GM12878 (cell line): ENCODE measurements at regions of chr12 and their contacts with region 1.

Region 1: DNA sequence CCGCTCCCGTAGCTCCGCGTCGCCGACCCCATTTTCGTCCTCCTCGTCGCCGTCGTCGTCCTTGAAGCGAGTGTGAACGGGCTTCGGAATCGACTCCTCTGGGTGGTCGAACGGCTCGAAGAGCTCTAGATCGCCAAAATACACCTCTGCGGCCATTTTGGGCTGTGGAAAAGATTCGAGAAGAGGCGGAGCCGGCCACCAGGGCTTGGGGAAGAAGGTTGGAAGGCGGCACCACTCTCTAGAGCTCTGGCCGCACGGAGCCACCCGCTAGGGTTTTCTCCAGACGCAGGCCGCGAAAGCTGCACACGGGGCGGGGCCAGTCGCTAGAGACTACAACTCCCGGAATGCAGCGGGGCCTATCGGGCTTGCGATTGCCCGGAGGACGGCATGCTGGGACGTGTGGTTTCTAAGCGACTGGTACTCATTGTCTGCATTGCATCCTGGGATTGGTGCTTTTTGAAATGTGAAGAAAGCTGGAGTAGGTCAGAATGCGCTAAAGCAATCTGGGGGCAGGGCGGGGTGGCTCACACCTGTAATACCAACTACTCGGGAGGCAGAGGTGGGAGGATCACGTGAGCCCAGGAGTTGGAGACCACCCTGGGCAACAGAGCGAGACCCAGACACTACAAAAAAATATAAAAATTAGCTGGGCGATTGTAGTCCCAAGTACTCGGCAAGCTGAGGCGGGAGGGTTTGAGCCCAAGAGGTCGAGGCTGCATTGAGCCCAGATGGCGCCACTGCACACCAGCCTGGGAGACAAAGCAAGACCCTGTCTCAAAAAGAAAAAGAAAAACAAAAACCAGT is at the start of gene ZCCHC8:
- DNase-seq: peak; percentile 95
- ATAC-seq: peak; percentile 95
- H3K4me3 ChIP-seq: peak within 1 kb of the TSS; percentile 96
- H3K27ac ChIP-seq: peak within 1 kb of the TSS; percentile 98
- H3K4me1 ChIP-seq: peaks cover 10% of the 10 kb centered on the region
- H3K27me3 ChIP-seq: no peaks in the 10 kb centered on the region
- CTCF ChIP-seq: peak in 2 of 3 experiments; percentile 12 to 15; a peak in 1 of 6 replicates
- EP300 ChIP-seq: 0 out of 4 replicates have a peak, but pooled peaks of 1 of the 2 experiments have one; percentile 23
- POLR2A ChIP-seq: peak; percentile 94
- RAD21 ChIP-seq: no peak
- polyA plus RNA-seq, gene ZCCHC8: 8.8 to 9.4 TPM

Region 2: GRCh38 chr12:122399592-122400373 is 101.1 kb before region 1 on chr12:
- CTCF ChIA-PET with region 1: interaction called, 16 read pairs
- POLR2A ChIA-PET with region 1: interaction called, 6 read pairs
- RAD21 ChIA-PET with region 1: interaction called, 33 read pairs
- SMC1A ChIA-PET with region 1: interaction called, 21 read pairs
- in situ Hi-C with region 1: no loop called
- intact Hi-C with region 1: no loop called
- DNase-seq: no peak
- ATAC-seq: peak; percentile 75
- H3K4me3 ChIP-seq: no peak overlapping the region
- H3K27ac ChIP-seq: peak overlapping the region; percentile 78
- H3K4me1 ChIP-seq: peaks cover 38% of the 10 kb centered on the region
- H3K27me3 ChIP-seq: no peaks in the 10 kb centered on the region
- CTCF ChIP-seq: peak; percentile 57 to 81 (median 76); a peak in 5 of 6 replicates
- EP300 ChIP-seq: no peak
- POLR2A ChIP-seq: no peak
- RAD21 ChIP-seq: peak; percentile 98

Region 3: GRCh38 chr12:122413516-122414404 is 87.1 kb before region 1 on chr12:
- CTCF ChIA-PET with region 1: interaction called, 3 read pairs
- POLR2A ChIA-PET with region 1: interaction called, 11 read pairs
- RAD21 ChIA-PET with region 1: interaction called, 3 read pairs
- SMC1A ChIA-PET with region 1: interaction called, 3 read pairs
- in situ Hi-C with region 1: no loop called
- intact Hi-C with region 1: no loop called
- DNase-seq: no peak
- ATAC-seq: peak; percentile 63
- H3K4me3 ChIP-seq: peak overlapping the region; percentile 50; the same call in 1 of the 2 replicates
- H3K27ac ChIP-seq: peak overlapping the region; percentile 95
- H3K4me1 ChIP-seq: peaks cover 36% of the 10 kb centered on the region
- H3K27me3 ChIP-seq: no peaks in the 10 kb centered on the region
- CTCF ChIP-seq: no peak
- EP300 ChIP-seq: 0 out of 4 replicates have a peak, but pooled peaks of 1 of the 2 experiments have one; percentile 27
- POLR2A ChIP-seq: no peak
- RAD21 ChIP-seq: no peak

Region 4: DNA sequence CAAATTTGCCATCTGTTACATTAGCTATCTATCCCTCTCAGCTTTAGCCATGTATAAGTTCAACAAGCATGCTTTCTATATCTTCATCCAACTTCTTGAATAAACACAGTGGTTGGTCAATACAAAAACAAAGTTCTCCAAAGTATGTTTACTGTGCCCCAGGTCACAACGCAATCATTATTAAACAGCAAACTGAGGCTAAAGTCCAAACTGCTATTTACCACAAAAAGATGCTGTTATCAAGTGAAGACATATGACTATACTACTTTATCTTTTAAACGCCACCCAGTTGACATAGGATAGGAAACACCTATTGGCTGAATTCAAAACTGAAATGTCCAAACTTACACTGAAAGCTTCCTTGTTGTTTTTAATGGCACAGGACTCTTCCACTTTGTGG is 11.8 kb before region 1 on chr12:
- CTCF ChIA-PET with region 1: interaction called, 6 read pairs
- POLR2A ChIA-PET with region 1: interaction called, 14 read pairs
- RAD21 ChIA-PET with region 1: interaction called, 4 read pairs
- SMC1A ChIA-PET with region 1: interaction called, 16 read pairs
- in situ Hi-C with region 1: no loop called
- intact Hi-C with region 1: no loop called
- DNase-seq: no peak
- ATAC-seq: no peak
- H3K4me3 ChIP-seq: no peak overlapping the region
- H3K27ac ChIP-seq: no peak overlapping the region
- H3K4me1 ChIP-seq: no peaks in the 10 kb centered on the region
- H3K27me3 ChIP-seq: no peaks in the 10 kb centered on the region
- CTCF ChIP-seq: no peak
- EP300 ChIP-seq: no peak
- POLR2A ChIP-seq: no peak
- RAD21 ChIP-seq: no peak

Region 5: DNA sequence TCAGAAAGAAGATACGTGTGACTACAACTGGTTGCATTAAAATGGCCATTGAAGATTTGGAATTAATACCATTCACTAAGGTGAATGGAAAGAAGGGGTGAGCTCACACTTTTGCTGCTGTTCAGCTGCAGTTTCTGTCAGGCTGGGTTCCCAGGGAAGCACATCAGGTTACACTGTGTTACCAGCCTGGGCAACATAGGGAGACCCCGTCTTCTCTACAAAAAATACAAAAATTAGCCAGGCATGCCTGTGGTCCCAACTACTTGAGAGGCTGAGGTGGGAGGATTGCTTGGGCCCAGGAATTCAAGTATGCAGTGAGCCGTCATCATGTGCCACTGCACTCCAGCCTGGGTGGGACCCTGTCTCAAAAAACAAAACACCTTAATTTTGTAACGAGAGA is 12.8 kb after region 1 on chr12:
- CTCF ChIA-PET with region 1: interaction called, 4 read pairs
- POLR2A ChIA-PET with region 1: interaction called, 40 read pairs
- RAD21 ChIA-PET with region 1: interaction called, 4 read pairs
- SMC1A ChIA-PET with region 1: interaction called, 39 read pairs
- in situ Hi-C with region 1: no loop called
- intact Hi-C with region 1: no loop called
- DNase-seq: no peak
- ATAC-seq: peak; percentile 19
- H3K4me3 ChIP-seq: no peak overlapping the region
- H3K27ac ChIP-seq: no peak overlapping the region
- H3K4me1 ChIP-seq: peaks cover 8% of the 10 kb centered on the region
- H3K27me3 ChIP-seq: no peaks in the 10 kb centered on the region
- CTCF ChIP-seq: no peak
- EP300 ChIP-seq: no peak
- POLR2A ChIP-seq: no peak
- RAD21 ChIP-seq: no peak

Region 6: GRCh38 chr12:122519418-122519817 is 18.5 kb after region 1 on chr12:
- CTCF ChIA-PET with region 1: interaction called, 13 read pairs
- POLR2A ChIA-PET with region 1: interaction called, 160 read pairs
- RAD21 ChIA-PET with region 1: interaction called, 14 read pairs
- SMC1A ChIA-PET with region 1: interaction called, 39 read pairs
- in situ Hi-C with region 1: no loop called
- intact Hi-C with region 1: no loop called
- DNase-seq: no peak
- ATAC-seq: peak; percentile 22
- H3K4me3 ChIP-seq: no peak overlapping the region
- H3K27ac ChIP-seq: no peak overlapping the region
- H3K4me1 ChIP-seq: peaks cover 13% of the 10 kb centered on the region
- H3K27me3 ChIP-seq: no peaks in the 10 kb centered on the region
- CTCF ChIP-seq: no peak
- EP300 ChIP-seq: no peak
- POLR2A ChIP-seq: no peak
- RAD21 ChIP-seq: no peak

Region 7: GRCh38 chr12:122526683-122527477 is 26.0 kb after region 1 on chr12 and contains the starts of genes KNTC1 and RSRC2:
- CTCF ChIA-PET with region 1: interaction called, 16 read pairs
- POLR2A ChIA-PET with region 1: interaction called, 160 read pairs
- RAD21 ChIA-PET with region 1: interaction called, 49 read pairs
- SMC1A ChIA-PET with region 1: interaction called, 39 read pairs
- in situ Hi-C with region 1: no loop called
- intact Hi-C with region 1: loop called (anchors 2 kb)
- DNase-seq: peak; percentile 99
- ATAC-seq: peak; percentile 86
- H3K4me3 ChIP-seq: peak within 1 kb of the TSS; percentile 96
- H3K27ac ChIP-seq: peak within 1 kb of the TSS; percentile 99
- H3K4me1 ChIP-seq: peaks cover 28% of the 10 kb centered on the region
- H3K27me3 ChIP-seq: no peaks in the 10 kb centered on the region
- CTCF ChIP-seq: no peak
- EP300 ChIP-seq: no peak
- POLR2A ChIP-seq: peak; percentile 99
- RAD21 ChIP-seq: no peak
- polyA plus RNA-seq, gene KNTC1: 37.2 to 38.3 TPM
- polyA plus RNA-seq, gene RSRC2: 49.8 to 52.3 TPM

Region 8: DNA sequence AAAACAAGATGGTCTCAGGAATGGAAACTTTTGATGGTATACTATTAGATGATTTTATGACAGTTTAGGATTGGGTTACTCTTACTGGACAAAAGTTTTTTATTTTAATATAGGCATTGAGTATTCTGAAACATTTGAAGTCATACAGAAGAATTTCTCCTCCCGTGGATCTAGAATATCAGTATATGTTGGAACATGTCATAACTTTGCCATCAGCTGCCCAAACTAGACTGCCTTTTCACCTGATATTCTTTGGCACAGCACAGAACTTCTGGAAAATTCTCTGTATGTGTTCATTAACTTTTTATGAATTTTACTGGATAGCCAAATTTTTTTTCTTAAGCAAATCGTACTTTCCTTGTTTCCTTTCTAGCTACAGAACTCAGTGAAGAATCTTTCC is 101.6 kb after region 1 on chr12:
- CTCF ChIA-PET with region 1: no interaction called
- POLR2A ChIA-PET with region 1: no interaction called
- RAD21 ChIA-PET with region 1: no interaction called
- SMC1A ChIA-PET with region 1: no interaction called
- in situ Hi-C with region 1: no loop called
- intact Hi-C with region 1: no loop called
- DNase-seq: no peak
- ATAC-seq: no peak
- H3K4me3 ChIP-seq: no peak overlapping the region
- H3K27ac ChIP-seq: no peak overlapping the region
- H3K4me1 ChIP-seq: no peaks in the 10 kb centered on the region
- H3K27me3 ChIP-seq: no peaks in the 10 kb centered on the region
- CTCF ChIP-seq: no peak
- EP300 ChIP-seq: no peak
- POLR2A ChIP-seq: no peak
- RAD21 ChIP-seq: no peak

Region 9: GRCh38 chr12:123200414-123200813 is 699.5 kb after region 1 on chr12:
- CTCF ChIA-PET with region 1: no interaction called
- POLR2A ChIA-PET with region 1: no interaction called
- RAD21 ChIA-PET with region 1: no interaction called
- SMC1A ChIA-PET with region 1: no interaction called
- in situ Hi-C with region 1: no loop called
- intact Hi-C with region 1: no loop called
- DNase-seq: no peak
- ATAC-seq: no peak
- H3K4me3 ChIP-seq: no peak overlapping the region
- H3K27ac ChIP-seq: no peak overlapping the region
- H3K4me1 ChIP-seq: no peaks in the 10 kb centered on the region
- H3K27me3 ChIP-seq: no peaks in the 10 kb centered on the region
- CTCF ChIP-seq: no peak
- EP300 ChIP-seq: no peak
- POLR2A ChIP-seq: no peak
- RAD21 ChIP-seq: no peak